Tibial artery (tissue), 4 donors: ENCODE measurements at regions of chr6 and their contacts with region 1.

Region 1: DNA sequence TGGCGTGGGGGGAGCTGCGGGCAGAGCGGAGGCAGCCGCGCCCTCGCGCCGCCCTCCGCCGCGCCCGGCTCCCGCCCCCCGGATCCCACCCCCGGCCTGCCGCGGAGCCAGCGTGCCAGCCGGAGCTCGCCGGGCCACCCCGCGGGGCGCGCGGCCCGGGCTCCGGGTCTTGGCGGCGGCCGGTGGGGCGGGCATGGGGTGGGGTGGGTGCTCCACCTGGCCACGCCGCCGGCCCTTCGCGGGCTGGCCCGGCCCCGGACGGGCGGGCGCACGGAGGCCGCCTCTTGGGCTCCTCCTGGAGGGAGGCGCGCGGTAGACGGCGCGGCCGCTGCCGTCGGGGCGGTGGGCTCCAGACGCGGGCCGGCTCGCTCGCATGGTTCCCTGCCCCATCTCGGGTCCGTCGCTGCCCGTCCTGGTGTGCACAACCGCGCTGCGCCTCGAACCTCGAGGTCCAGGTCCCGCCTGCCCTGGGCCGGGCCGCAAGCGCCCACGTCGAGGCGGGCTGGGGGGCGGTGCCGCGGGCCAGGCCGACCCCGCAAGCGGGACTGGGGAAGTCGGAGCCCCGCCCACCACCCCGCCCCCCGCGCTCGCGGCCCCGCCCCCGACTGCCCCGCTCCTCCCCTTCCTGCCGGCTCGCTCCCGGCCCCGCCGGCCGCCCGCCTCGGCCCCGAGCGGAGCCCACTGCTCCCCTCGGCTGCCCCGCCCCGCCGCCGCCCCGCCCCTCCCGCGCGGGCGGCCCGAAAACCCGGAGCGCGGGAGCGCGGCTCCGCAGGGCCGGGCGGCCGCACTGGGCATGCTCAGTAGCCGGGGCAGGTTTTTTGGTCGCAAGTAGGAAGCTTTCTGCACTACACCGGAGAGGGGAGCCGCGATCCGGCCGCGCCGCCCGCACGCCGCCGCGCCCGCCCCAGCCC is at the start of gene CDYL:
- DNase-seq: peak; percentile 77 to 94
- H3K4me3 ChIP-seq: peak within 1 kb of the TSS; percentile 84 to 88
- H3K27ac ChIP-seq: peak within 1 kb of the TSS; percentile 85 to 86
- H3K4me1 ChIP-seq: peaks cover 0 to 28% (median 7%) of the 10 kb centered on the region in 4 donors
- H3K27me3 ChIP-seq: no peaks in the 10 kb centered on the region
- CTCF ChIP-seq: peak; percentile 27 to 32

Region 2: DNA sequence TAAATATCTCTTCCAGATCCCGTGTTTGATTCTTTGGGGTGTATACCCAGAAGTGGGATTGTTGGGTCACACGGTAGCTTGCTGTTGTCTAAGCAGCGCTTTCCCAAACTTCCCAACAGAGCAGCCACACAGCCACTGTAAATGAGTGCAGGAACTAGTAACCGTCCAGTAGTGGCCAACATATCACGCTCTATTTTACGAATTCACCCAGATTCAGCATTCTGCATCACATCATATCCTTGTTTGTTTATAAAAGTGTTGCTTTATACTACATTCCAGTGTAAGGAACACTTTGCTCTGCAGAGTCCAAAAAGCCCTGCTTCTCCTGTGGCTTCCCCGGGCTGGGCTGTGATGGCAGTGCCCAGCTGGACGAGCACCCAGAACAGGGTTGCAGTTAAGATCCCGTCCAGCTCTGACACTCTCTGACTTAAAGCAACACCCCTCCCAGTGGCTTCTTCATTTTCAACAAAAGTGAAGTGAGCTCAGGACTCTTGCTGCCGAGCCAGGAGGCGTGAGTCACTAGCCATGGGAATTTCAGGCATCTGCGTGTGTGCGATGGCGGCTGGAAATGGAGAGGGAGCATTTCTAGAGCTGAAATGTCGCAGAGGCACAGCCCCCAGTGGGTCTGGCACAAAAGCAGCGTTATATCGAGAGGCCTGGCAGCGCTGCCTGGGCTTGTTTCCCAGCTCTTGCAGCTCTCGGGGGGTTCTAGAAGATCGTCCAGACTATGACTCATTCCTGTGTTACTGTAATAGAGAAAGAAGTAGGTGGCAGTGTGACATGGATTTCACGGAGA is 424.1 kb before region 1 on chr6:
- intact Hi-C with region 1: loop called (anchors 5 kb)
- DNase-seq: peak; percentile 58 to 89
- H3K4me3 ChIP-seq: peak overlapping the region; percentile 27 to 39
- H3K27ac ChIP-seq: peak overlapping the region; percentile 66 to 67
- H3K4me1 ChIP-seq: peaks cover 0 to 20% (median 16%) of the 10 kb centered on the region in 4 donors
- H3K27me3 ChIP-seq: no peaks in the 10 kb centered on the region
- CTCF ChIP-seq: no peak

Region 3: DNA sequence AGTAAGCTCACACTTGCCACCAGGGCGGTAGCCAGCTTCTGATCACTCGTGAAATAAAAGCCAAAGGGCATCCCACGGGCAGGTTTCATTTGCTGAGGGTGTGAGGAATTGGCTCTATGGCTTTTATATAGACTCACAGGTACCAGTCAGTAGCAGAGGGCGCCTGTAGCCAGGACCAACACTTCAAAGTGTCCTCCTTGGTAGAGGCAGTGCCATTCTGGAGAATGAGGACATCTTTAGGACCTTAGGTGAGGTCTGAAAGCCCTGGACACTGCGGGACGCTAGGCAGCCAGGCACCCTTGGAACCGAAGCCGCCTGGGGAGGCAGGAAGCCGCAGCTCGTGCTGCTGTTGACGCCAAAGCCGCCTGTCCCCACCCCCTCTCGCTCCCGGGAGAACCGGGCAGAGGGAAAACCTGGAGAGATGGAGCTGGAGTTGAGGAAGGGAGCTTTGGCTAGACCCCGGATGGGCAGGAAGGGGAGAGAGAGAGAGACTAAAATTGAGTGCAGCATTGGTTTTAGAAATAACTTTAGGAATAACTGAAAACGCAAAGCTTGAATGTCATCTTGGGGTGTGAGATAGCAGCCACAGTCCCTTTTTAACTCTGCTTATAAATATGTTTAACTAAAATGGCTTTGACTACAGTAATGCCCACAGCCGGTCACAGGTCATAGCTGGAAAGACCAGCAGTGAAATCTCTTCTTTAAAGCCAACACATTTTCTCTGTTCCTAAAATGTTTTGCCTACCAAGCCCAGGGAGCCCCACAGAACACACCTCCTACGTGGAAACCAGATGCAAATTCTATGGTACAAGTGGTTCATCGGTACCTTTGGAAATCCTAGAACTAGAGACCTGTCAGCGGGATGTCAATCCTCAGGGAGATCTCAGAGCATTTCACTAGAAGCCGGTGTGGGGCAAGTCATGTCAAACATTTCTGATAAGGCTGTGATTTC is 128.1 kb before region 1 on chr6:
- intact Hi-C with region 1: loop called (anchors 5 kb)
- DNase-seq: peak; percentile 74 to 92
- H3K4me3 ChIP-seq: peak overlapping the region; percentile 36 to 43
- H3K27ac ChIP-seq: peak overlapping the region; percentile 49 to 69
- H3K4me1 ChIP-seq: peaks cover 0 to 6% (median 0%) of the 10 kb centered on the region in 4 donors
- H3K27me3 ChIP-seq: no peaks in the 10 kb centered on the region
- CTCF ChIP-seq: no peak